Testis (tissue), 5 donors: ENCODE measurements at regions of chr1 and their contacts with region 1.

Region 1: DNA sequence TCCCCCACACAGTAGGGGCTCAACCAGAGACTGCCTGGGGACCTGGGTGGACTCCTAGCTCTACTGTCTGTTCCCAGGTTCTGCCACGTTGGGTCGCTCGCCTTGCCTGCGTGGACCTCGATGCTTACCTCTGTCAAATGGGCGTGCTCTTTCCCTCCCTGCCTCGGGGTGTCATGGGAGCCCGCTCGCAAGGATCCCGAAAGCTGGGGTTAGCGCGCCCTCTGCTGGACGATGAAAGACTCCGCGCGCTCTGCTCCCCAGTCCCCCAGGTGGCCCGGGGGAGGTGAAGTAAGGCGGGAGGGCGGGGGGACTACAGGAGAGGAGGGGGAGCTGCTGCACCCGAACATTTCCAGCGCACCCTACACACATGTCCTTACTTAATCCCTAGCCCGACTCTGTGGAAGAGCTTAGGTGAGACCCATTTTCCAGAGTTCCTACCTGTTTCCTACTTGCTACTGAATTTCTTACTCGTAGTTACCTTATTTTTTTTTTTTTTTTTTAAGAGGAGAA is 2.3 kb upstream of the BSND start:
- DNase-seq: peak; percentile 75
- H3K4me3 ChIP-seq: peak overlapping the region; percentile 6 to 31
- H3K27ac ChIP-seq: no peak overlapping the region
- H3K4me1 ChIP-seq: no peaks in the 10 kb centered on the region
- H3K27me3 ChIP-seq: no peaks in the 10 kb centered on the region
- CTCF ChIP-seq: peak; percentile 52 to 83 (median 77)
- POLR2A ChIP-seq: no peak

Region 2: DNA sequence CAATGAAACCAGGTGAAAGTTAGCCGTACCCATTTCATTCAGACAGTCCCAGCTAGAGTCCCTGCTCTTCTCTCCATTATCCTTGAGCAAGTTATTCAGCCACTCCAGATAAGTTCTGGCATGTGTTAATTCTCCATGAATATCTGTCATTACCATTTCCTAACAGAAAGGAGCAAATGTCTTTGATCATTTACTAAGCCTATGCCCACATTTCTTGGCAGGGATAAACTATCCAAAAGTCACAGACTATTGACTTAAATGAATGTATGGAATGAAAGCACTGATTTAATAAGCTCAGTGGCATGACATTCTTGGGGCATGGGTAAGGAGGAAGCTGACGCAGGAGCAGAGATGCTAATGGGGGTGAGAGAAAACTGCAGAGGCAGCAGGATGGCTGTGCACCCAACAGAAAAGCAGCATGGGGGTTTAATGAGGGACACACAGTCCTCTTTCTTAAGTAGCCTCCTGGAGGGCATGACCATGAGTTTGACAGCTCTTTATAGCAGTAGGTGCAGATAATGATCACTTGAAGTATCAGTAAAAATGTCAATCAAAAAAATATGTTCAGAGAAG is 91.9 kb before region 1 on chr1:
- intact Hi-C with region 1: no loop called
- DNase-seq: no peak
- H3K4me3 ChIP-seq: no peak overlapping the region
- H3K27ac ChIP-seq: no peak overlapping the region
- H3K4me1 ChIP-seq: no peaks in the 10 kb centered on the region
- H3K27me3 ChIP-seq: no peaks in the 10 kb centered on the region
- CTCF ChIP-seq: no peak
- POLR2A ChIP-seq: no peak

Region 3: GRCh38 chr1:54944610-54945544 is 51.5 kb before region 1 on chr1:
- intact Hi-C with region 1: loop called (anchors 5 kb)
- DNase-seq: peak; percentile 86
- H3K4me3 ChIP-seq: no peak overlapping the region
- H3K27ac ChIP-seq: no peak overlapping the region
- H3K4me1 ChIP-seq: no peaks in the 10 kb centered on the region
- H3K27me3 ChIP-seq: no peaks in the 10 kb centered on the region
- CTCF ChIP-seq: peak; percentile 63 to 82 (median 63)
- POLR2A ChIP-seq: no peak